OCI-LY7 (cell line): ENCODE measurements at regions of chr1 and their contacts with region 1.

Region 1: DNA sequence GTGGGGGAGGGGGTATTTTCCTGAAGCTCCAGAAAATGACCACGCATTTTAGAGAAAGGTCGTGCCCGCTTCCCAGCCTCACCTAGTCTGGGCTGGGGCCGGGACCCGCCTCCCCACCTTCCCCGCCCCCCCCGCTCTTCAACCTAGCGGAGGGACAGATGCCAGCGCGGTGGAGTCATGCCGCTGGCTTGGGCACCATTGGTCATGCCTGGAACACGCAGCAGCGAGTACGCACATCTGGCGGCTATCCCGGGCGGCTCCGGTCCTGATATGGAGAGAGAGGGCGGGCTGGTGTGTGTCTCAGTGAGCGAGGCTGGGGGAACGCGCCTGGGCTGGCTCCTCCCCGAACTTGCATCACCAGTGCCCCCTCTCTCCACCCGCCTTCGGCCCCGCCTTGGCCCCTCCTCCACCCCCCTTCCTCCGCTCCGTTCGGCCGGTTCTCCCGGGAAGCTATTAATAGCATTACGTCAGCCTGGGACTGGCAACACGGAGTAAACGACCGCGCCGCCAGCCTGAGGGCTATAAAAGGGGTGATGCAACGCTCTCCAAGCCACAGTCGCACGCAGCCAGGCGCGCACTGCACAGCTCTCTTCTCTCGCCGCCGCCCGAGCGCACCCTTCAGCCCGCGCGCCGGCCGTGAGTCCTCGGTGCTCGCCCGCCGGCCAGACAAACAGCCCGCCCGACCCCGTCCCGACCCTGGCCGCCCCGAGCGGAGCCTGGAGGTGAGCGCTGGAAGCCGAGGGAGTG is at the start of gene ATF3:
- DNase-seq: peak; percentile 77
- H3K4me3 ChIP-seq: peak within 1 kb of the TSS; percentile 78
- H3K27ac ChIP-seq: no peak within 1 kb of the TSS
- H3K4me1 ChIP-seq: peaks cover 4% of the 10 kb centered on the region
- CTCF ChIP-seq: no peak
- total RNA-seq, gene ATF3: 2.7 and 4.7 TPM in 2 replicates

Region 2: GRCh38 chr1:212477014-212477679 is 131.2 kb before region 1 on chr1:
- CTCF ChIA-PET with region 1: no interaction called
- POLR2A ChIA-PET with region 1: no interaction called
- intact Hi-C with region 1: loop called (anchors 5 kb)
- DNase-seq: peak; percentile 85
- H3K4me3 ChIP-seq: no peak overlapping the region
- H3K27ac ChIP-seq: no peak overlapping the region
- H3K4me1 ChIP-seq: no peaks in the 10 kb centered on the region
- CTCF ChIP-seq: peak; percentile 93

Region 3: GRCh38 chr1:212566522-212567479 is 41.6 kb before region 1 on chr1:
- CTCF ChIA-PET with region 1: no interaction called
- POLR2A ChIA-PET with region 1: no interaction called
- intact Hi-C with region 1: loop called (anchors 2 kb)
- DNase-seq: peak; percentile 56
- H3K4me3 ChIP-seq: peak overlapping the region; percentile 63
- H3K27ac ChIP-seq: no peak overlapping the region
- H3K4me1 ChIP-seq: peaks cover 15% of the 10 kb centered on the region
- CTCF ChIP-seq: no peak

Region 4: GRCh38 chr1:212665241-212666115 is 57.1 kb after region 1 on chr1:
- CTCF ChIA-PET with region 1: no interaction called
- POLR2A ChIA-PET with region 1: interaction called, 3 read pairs
- intact Hi-C with region 1: loop called (anchors 5 kb)
- DNase-seq: peak; percentile 75
- H3K4me3 ChIP-seq: peak overlapping the region; percentile 24
- H3K27ac ChIP-seq: no peak overlapping the region
- H3K4me1 ChIP-seq: peaks cover 7% of the 10 kb centered on the region
- CTCF ChIP-seq: peak; percentile 85

Region 5: GRCh38 chr1:212791676-212792395 is 183.5 kb after region 1 on chr1 and contains the starts of genes NSL1 and TATDN3:
- CTCF ChIA-PET with region 1: no interaction called
- POLR2A ChIA-PET with region 1: no interaction called
- intact Hi-C with region 1: loop called (anchors 5 kb)
- DNase-seq: peak; percentile 94
- H3K4me3 ChIP-seq: peak within 1 kb of the TSS; percentile 89
- H3K27ac ChIP-seq: peak within 1 kb of the TSS; percentile 89
- H3K4me1 ChIP-seq: peaks cover 62% of the 10 kb centered on the region
- CTCF ChIP-seq: no peak
- total RNA-seq, gene NSL1: 70.9 and 74.9 TPM in 2 replicates
- total RNA-seq, gene TATDN3: 35.4 and 36.1 TPM in 2 replicates

Region 6: GRCh38 chr1:212805767-212806166 is 197.4 kb after region 1 on chr1:
- CTCF ChIA-PET with region 1: no interaction called
- POLR2A ChIA-PET with region 1: no interaction called
- intact Hi-C with region 1: no loop called
- DNase-seq: no peak
- H3K4me3 ChIP-seq: no peak overlapping the region
- H3K27ac ChIP-seq: no peak overlapping the region
- H3K4me1 ChIP-seq: no peaks in the 10 kb centered on the region
- CTCF ChIP-seq: no peak